HepG2 (cell line): ENCODE measurements at regions of chr17 and their contacts with region 1.

Region 1: DNA sequence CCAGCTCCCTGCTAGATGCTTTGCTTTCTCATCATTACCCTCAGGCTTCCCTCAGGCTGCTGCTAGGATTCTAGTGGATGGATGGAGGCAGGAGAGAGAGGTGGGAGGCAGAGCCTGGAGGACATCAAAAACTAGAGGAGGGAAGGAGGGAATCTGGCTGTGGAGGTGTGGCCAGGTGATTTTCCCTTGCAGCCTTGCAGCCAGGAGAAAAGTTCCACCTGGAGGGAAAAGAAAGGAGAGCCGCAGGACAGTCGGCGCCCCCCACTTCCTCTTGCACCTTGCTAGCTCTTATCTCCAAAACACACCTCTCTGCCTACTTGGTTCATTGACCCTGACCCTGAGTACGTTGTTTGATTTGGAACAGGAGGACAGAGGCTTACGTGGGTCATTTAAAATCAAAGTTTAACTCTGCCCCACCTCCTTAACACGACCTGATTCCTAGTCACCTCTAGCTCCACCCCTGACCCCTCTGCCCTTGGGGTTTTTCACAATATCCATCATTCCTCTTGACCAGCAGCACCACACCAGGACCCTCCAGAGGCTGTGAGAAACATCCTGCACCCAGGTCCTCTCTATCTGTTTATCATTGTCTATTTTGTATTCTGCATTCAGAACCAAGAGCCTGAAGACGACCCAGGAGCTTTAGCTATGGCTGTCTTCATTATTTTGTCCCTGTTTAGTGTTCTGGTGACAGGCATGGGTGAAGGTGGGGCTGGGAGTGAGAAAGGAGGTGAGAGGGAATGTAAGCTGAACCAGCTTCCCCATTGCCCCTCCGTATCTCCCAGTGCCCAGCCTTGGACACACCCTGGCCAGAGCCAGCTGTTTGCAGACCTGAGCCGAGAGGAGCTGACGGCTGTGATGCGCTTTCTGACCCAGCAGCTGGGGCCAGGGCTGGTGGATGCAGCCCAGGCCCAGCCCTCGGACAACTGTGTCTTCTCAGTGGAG is 15.9 kb downstream of the AOC3 start:
- DNase-seq: peak; percentile 68
- ATAC-seq: peak; percentile 60
- H3K4me3 ChIP-seq: peak overlapping the region in 2 of 3 experiments; percentile 18 to 44; a peak in 4 of 6 replicates
- H3K27ac ChIP-seq: peak overlapping the region; percentile 62
- H3K4me1 ChIP-seq: peaks cover 73% of the 10 kb centered on the region
- H3K27me3 ChIP-seq: no peaks in the 10 kb centered on the region
- CTCF ChIP-seq: no peak
- EP300 ChIP-seq: peak in 1 of 2 experiments; percentile 91; a peak in 2 of 4 replicates
- POLR2A ChIP-seq: peak in 1 of 2 experiments; percentile 18; a peak in 1 of 4 replicates
- RAD21 ChIP-seq: no peak

Region 2: GRCh38 chr17:42850954-42851353 is 15.9 kb before region 1 on chr17 and contains the start of gene AOC3:
- CTCF ChIA-PET with region 1: no interaction called
- POLR2A ChIA-PET with region 1: interaction called, 36 read pairs
- in situ Hi-C with region 1: no loop called
- intact Hi-C with region 1: loop called (anchors 2 kb)
- DNase-seq: peak; percentile 28
- ATAC-seq: peak; percentile 13; the same call in 2 of the 3 replicates
- H3K4me3 ChIP-seq: peak within 1 kb of the TSS in 2 of 3 experiments; percentile 23 to 58; a peak in 2 of 6 replicates
- H3K27ac ChIP-seq: no peak within 1 kb of the TSS
- H3K4me1 ChIP-seq: peaks cover 75% of the 10 kb centered on the region
- H3K27me3 ChIP-seq: no peaks in the 10 kb centered on the region
- CTCF ChIP-seq: no peak
- EP300 ChIP-seq: no peak
- POLR2A ChIP-seq: no peak
- RAD21 ChIP-seq: no peak
- total RNA-seq, gene AOC3: 8.7 and 10.4 TPM in 2 replicates

Region 3: GRCh38 chr17:42886283-42887176 is 19.6 kb after region 1 on chr17:
- CTCF ChIA-PET with region 1: no interaction called
- POLR2A ChIA-PET with region 1: interaction called, 19 read pairs
- in situ Hi-C with region 1: no loop called
- intact Hi-C with region 1: no loop called
- DNase-seq: peak; percentile 72
- ATAC-seq: peak; percentile 78
- H3K4me3 ChIP-seq: peak overlapping the region in 1 of 3 experiments; percentile 49; a peak in 2 of 6 replicates
- H3K27ac ChIP-seq: peak overlapping the region; percentile 65
- H3K4me1 ChIP-seq: peaks cover 96% of the 10 kb centered on the region
- H3K27me3 ChIP-seq: no peaks in the 10 kb centered on the region
- CTCF ChIP-seq: peak; percentile 45
- EP300 ChIP-seq: no peak; a peak in 1 of 4 replicates
- POLR2A ChIP-seq: no peak; a peak in 2 of 4 replicates
- RAD21 ChIP-seq: peak; percentile 67; the same call in 1 of the 2 replicates

Region 4: DNA sequence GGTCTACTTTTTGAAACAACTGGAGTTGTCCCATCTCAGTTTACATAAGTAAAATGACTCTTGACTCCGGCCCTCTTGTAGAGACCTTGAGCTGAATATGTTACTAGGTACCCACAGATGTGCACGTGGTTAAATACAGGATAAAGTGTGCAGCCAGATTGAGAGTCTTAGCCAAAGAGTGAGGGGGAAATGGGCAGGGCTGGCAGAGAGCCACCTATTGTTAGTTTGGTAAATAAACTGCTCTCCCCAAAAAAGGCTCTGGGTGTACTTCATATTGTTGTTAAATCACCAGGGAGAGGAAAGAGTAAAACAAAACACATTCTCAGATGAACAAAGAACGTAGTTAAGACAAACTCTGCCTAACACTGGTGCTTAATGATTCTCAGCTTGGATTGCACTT is 54.0 kb after region 1 on chr17:
- CTCF ChIA-PET with region 1: no interaction called
- POLR2A ChIA-PET with region 1: interaction called, 23 read pairs
- in situ Hi-C with region 1: no loop called
- intact Hi-C with region 1: no loop called
- DNase-seq: peak; percentile 18
- ATAC-seq: peak; percentile 45
- H3K4me3 ChIP-seq: no peak overlapping the region
- H3K27ac ChIP-seq: peak overlapping the region; percentile 53
- H3K4me1 ChIP-seq: peaks cover 68% of the 10 kb centered on the region
- H3K27me3 ChIP-seq: no peaks in the 10 kb centered on the region
- CTCF ChIP-seq: no peak
- EP300 ChIP-seq: peak in 1 of 2 experiments; percentile 31; a peak in 1 of 4 replicates
- POLR2A ChIP-seq: no peak
- RAD21 ChIP-seq: no peak